ENCODE measurements at regions of chr2 and their contacts with region 1.

Region 1: GRCh38 chr2:237978058-237978712 is 11.4 kb downstream of the UBE2F start:
- DNase-seq: no peak
- ATAC-seq: peak; percentile 11
- H3K4me3 Mint-ChIP-seq: no peak overlapping the region
- H3K27ac Mint-ChIP-seq: peak overlapping the region; percentile 95
- H3K4me1 Mint-ChIP-seq: peaks cover 63% of the 10 kb centered on the region
- H3K27me3 Mint-ChIP-seq: no peaks in the 10 kb centered on the region
- CTCF ChIP-seq: no peak

Region 2: GRCh38 chr2:237966565-237967462 is 11.4 kb before region 1 on chr2 and contains the start of gene UBE2F:
- CTCF ChIA-PET with region 1: interaction called, 9 read pairs
- POLR2A ChIA-PET with region 1: interaction called, 26 read pairs
- intact Hi-C with region 1: no loop called
- DNase-seq: peak; percentile 97
- ATAC-seq: peak; percentile 95
- H3K4me3 Mint-ChIP-seq: peak within 1 kb of the TSS; percentile 80
- H3K27ac Mint-ChIP-seq: peak within 1 kb of the TSS; percentile 73
- H3K4me1 Mint-ChIP-seq: peaks cover 39% of the 10 kb centered on the region
- H3K27me3 Mint-ChIP-seq: no peaks in the 10 kb centered on the region
- CTCF ChIP-seq: no peak
- total RNA-seq, gene UBE2F: 96.5 to 99.5 TPM

Region 3: GRCh38 chr2:238077292-238077691 is 99.1 kb after region 1 on chr2:
- CTCF ChIA-PET with region 1: no interaction called
- POLR2A ChIA-PET with region 1: no interaction called
- intact Hi-C with region 1: loop called (anchors 5 kb)
- DNase-seq: no peak
- ATAC-seq: no peak
- H3K4me3 Mint-ChIP-seq: no peak overlapping the region
- H3K27ac Mint-ChIP-seq: peak overlapping the region; percentile 49
- H3K4me1 Mint-ChIP-seq: peaks cover 24% of the 10 kb centered on the region
- H3K27me3 Mint-ChIP-seq: no peaks in the 10 kb centered on the region
- CTCF ChIP-seq: no peak

Measured in activated CD8-positive, alpha-beta T cell treated with anti-CD3 and anti-CD28 coated beads for 36 hours (primary cell).